GM23248 (cell line): ENCODE measurements at regions of chr14 and their contacts with region 1.

Region 1: GRCh38 chr14:80055667-80056496 is 155.4 kb downstream of the DIO2 start:
- DNase-seq: peak; percentile 73
- H3K4me3 ChIP-seq: no peak overlapping the region
- H3K27ac ChIP-seq: no peak overlapping the region
- H3K4me1 ChIP-seq: 0 out of 2 replicates have a peak, but pooled peaks cover 3% of the 10 kb centered on the region
- H3K27me3 ChIP-seq: no peaks in the 10 kb centered on the region

Region 2: GRCh38 chr14:80587075-80587724 is 531.3 kb after region 1 on chr14:
- in situ Hi-C with region 1: loop called (anchors 10 kb)
- DNase-seq: peak; percentile 69
- H3K4me3 ChIP-seq: no peak overlapping the region
- H3K27ac ChIP-seq: no peak overlapping the region
- H3K4me1 ChIP-seq: peaks cover 8% of the 10 kb centered on the region; the same call in 1 of the 2 replicates
- H3K27me3 ChIP-seq: no peaks in the 10 kb centered on the region